ENCODE measurements at regions of chr3 and their contacts with region 1.

Region 1: DNA sequence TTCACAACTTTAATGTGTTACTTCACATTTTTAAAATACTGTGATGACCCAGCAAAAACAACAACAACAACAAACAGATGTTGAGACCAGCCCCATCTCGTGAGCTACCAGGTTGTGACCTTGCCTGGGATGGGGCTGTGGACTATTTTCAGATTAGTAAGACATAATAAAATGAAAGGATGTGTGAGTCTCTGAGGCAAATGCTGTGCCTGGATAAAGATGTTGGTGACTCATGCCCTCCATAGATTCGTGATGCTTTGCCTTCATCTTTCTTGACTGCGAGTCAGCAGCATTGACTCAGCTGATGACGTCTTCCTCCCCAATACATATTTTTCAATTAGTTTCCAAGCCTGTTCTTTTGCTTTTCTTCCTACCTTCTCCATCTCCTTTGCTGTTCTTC is 453.0 kb upstream of the CFAP20DC start:
- DNase-seq: no peak

Region 2: DNA sequence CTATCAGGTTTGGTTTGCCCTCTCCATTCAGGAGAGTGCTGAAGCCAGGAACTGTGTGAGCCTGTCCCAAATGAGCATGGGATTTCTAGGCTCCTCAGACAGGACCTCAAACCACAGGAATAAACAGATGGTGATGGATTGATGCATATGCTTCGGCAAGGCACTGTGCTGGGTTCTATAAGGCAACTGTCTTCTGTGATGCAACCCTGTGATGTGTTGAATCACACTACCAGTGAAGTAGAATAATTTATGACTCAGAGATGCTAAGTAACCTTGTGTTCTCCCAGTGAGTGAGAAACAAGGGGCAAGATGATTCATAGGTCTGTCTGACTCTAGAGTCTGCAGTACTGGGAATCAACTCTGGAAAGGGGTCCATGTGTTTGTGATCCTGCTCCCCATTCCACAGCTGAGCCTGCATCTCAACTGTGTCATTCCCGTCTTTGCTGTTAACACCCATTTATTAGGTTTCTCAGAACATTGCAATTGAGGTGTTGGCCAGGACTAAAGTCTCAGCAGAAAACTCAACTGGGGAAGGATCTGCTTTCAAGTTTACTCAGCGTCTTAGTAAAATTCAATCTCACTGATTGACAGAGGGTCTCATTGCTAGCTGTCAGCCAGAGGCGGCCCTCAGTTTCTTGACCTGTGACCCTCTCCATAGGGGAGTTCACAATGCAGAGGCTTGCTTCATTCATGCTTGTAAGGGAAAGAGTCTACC is 57.1 kb after region 1 on chr3:
- intact Hi-C with region 1: loop called (anchors 2 kb)
- DNase-seq: no peak